Esophagus muscularis mucosa (tissue), 4 donors: ENCODE measurements at regions of chr12 and their contacts with region 1.

Region 1: GRCh38 chr12:119176267-119176849 is 2.4 kb upstream of the HSPB8 start:
- DNase-seq: peak; percentile 97
- H3K4me3 ChIP-seq: peak overlapping the region; percentile 42 to 55 (median 46)
- H3K27ac ChIP-seq: peak overlapping the region; percentile 86 to 98 (median 96)
- H3K4me1 ChIP-seq: peaks cover 24 to 46% (median 27%) of the 10 kb centered on the region in 4 donors
- H3K27me3 ChIP-seq: peaks cover 0 to 5% (median 2%) of the 10 kb centered on the region in 4 donors
- CTCF ChIP-seq: no peak
- EP300 ChIP-seq: peak; percentile 41
- POLR2A ChIP-seq: no peak

Region 2: DNA sequence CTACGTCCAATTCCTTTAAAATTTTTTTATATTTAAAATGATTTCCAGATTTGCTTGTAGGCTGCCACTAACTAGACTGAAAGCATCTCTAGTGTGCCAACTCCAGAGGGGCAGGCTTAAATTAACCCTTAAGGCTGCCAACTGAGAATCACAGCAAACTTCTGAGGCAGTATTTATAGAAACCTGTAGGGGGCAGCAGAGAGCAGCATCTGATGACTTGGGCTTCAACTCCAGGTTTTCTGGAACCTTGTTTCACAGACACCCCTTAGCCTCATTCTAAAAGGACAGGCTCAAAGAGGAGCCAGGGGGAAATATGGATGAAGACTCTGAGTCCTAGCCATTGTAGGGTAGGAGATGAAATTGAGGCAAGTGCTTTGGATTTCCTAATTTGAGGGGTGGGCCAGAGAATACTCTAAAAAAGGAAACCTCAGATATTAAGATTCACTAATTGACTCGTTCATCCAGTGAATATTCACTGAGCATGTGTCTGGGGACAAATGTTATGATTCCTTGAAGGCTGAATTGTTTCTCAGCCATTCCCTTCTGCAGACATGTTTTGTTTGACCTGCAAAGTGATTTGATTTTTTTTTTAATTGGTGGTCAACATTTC is 61.0 kb before region 1 on chr12:
- intact Hi-C with region 1: no loop called
- DNase-seq: no peak
- H3K4me3 ChIP-seq: no peak overlapping the region
- H3K27ac ChIP-seq: no peak overlapping the region
- H3K4me1 ChIP-seq: no peaks in the 10 kb centered on the region
- H3K27me3 ChIP-seq: peaks cover 0 to 7% (median 0%) of the 10 kb centered on the region in 4 donors
- CTCF ChIP-seq: peak; percentile 89
- EP300 ChIP-seq: no peak
- POLR2A ChIP-seq: no peak

Region 3: GRCh38 chr12:119208622-119209061 is 32.3 kb after region 1 on chr12:
- intact Hi-C with region 1: loop called (anchors 2 kb)
- DNase-seq: peak; percentile 95
- H3K4me3 ChIP-seq: no peak overlapping the region
- H3K27ac ChIP-seq: peak overlapping the region; percentile 81 to 86 (median 83)
- H3K4me1 ChIP-seq: peaks cover 33 to 59% (median 50%) of the 10 kb centered on the region in 4 donors
- H3K27me3 ChIP-seq: no peaks in the 10 kb centered on the region
- CTCF ChIP-seq: no peak
- EP300 ChIP-seq: peak; percentile 58
- POLR2A ChIP-seq: no peak

Region 4: GRCh38 chr12:119245904-119246494 is 69.6 kb after region 1 on chr12:
- intact Hi-C with region 1: no loop called
- DNase-seq: no peak
- H3K4me3 ChIP-seq: no peak overlapping the region
- H3K27ac ChIP-seq: peak overlapping the region; percentile 6 to 45 (median 39)
- H3K4me1 ChIP-seq: peaks cover 16 to 18% (median 18%) of the 10 kb centered on the region in 4 donors
- H3K27me3 ChIP-seq: no peaks in the 10 kb centered on the region
- CTCF ChIP-seq: no peak
- EP300 ChIP-seq: no peak
- POLR2A ChIP-seq: no peak

Region 5: GRCh38 chr12:119412811-119413794 is 236.7 kb after region 1 on chr12:
- intact Hi-C with region 1: loop called (anchors 5 kb)
- DNase-seq: peak; percentile 94
- H3K4me3 ChIP-seq: no peak overlapping the region
- H3K27ac ChIP-seq: peak overlapping the region in 3 of 4 donors; percentile 20 to 56 (median 23)
- H3K4me1 ChIP-seq: peaks cover 6 to 38% (median 28%) of the 10 kb centered on the region in 4 donors
- H3K27me3 ChIP-seq: no peaks in the 10 kb centered on the region
- CTCF ChIP-seq: peak; percentile 90 to 94 (median 93)
- EP300 ChIP-seq: no peak
- POLR2A ChIP-seq: no peak